MCF 10A (cell line): ENCODE measurements at regions of chr20 and their contacts with region 1.

Region 1: GRCh38 chr20:64038565-64039292 is 2.7 kb downstream of the C20orf204 start:
- DNase-seq: peak; percentile 77
- H3K4me3 Mint-ChIP-seq: peak overlapping the region; percentile 65
- H3K27ac Mint-ChIP-seq: no peak overlapping the region
- H3K4me1 Mint-ChIP-seq: peaks cover 9% of the 10 kb centered on the region
- H3K27me3 Mint-ChIP-seq: no peaks in the 10 kb centered on the region
- CTCF ChIP-seq: peak; percentile 79

Region 2: DNA sequence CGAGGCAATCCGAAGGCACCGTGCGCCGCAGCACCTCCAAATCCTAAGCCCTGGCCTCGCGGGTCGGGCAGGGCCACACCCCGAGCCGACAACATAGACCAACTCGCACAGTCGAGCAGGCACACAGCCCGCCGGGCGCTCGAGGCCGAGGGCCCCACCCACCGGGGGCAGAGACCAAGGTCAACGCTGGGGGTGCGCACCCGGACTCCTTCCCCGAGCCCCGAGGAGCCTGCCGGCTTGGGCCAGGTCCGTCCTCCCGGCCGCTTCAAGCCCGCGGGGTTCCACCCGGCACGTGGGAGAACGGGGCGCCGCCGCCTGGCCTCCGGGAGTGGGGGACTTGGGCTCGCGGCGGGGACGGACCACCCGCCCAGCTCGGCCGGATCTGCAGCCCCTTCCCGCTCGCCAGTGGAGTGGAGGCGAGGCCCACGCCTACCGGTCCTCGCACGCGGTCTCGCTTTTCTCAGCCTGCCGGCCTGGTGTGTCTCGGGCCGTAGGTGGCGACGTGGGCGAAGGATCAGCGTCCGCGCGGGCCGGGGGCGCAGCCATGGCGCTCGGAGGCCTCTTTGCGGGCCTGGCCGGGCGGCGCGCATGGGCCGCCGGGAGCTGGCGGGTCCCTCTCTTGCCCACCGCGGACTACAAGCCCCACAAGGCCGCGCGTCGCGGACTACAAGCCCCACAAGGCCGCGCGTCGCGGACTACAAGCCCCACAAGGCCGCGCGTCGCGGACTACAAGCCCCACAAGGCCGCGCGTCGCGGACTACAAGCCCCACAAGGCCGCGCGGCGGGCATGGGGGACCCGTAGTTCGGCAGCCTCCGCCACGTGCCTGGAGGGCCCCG is 82.7 kb before region 1 on chr20 and contains the start of gene UCKL1:
- CTCF ChIA-PET with region 1: interaction called, 3 read pairs
- POLR2A ChIA-PET with region 1: interaction called, 13 read pairs
- intact Hi-C with region 1: no loop called
- DNase-seq: peak; percentile 81
- H3K4me3 Mint-ChIP-seq: peak within 1 kb of the TSS; percentile 74
- H3K27ac Mint-ChIP-seq: no peak within 1 kb of the TSS
- H3K4me1 Mint-ChIP-seq: peaks cover 21% of the 10 kb centered on the region
- H3K27me3 Mint-ChIP-seq: no peaks in the 10 kb centered on the region
- CTCF ChIP-seq: no peak
- total RNA-seq, gene UCKL1: 38.6 and 43.7 TPM in 2 replicates

Region 3: GRCh38 chr20:64003960-64004725 is 34.6 kb before region 1 on chr20:
- CTCF ChIA-PET with region 1: interaction called, 18 read pairs
- POLR2A ChIA-PET with region 1: no interaction called
- intact Hi-C with region 1: no loop called
- DNase-seq: no peak
- H3K4me3 Mint-ChIP-seq: no peak overlapping the region
- H3K27ac Mint-ChIP-seq: no peak overlapping the region
- H3K4me1 Mint-ChIP-seq: no peaks in the 10 kb centered on the region
- H3K27me3 Mint-ChIP-seq: no peaks in the 10 kb centered on the region
- CTCF ChIP-seq: no peak

Region 4: DNA sequence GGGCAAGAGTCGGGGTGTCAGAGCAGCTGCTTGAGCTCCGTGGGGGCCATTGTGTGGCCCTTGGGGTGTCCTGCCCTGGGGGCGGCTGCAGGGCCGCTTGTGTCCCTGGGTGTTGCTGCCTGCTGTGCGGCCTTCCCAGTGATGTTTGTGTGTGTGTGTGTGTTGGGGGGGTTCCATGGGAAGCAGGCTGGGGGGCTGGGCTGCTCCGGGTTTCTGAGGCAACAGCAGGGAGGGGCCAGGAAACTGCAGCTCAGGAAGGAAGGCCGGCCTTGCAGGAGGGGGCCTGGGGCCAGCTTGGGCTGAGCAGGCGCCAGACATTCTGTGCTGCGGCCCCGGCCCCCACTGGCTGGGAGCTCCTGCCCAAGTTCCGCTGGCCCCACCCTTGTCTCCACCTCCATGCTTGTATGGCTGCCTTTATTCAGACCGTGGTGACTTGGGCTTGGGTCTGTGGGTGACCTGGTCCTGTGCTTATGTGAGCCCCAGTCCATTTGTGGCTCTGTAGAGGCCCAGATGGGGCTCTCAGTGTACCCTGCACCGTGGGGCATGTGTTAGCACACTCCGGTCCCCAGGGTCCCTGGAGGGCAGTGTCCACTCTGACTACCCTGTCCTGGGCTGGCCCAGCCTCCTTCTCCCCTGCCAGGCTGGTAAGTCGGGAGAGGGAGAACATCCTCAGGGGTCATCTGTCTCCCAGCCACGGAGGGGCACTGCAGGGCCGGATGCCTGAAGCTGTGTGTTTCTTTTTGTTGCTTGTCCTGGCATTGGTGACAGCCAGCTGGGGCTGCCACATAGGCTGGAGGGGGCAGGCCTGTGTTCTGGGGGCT is 15.3 kb after region 1 on chr20:
- CTCF ChIA-PET with region 1: interaction called, 284 read pairs
- POLR2A ChIA-PET with region 1: interaction called, 15 read pairs
- intact Hi-C with region 1: loop called (anchors 1 kb)
- DNase-seq: peak; percentile 33
- H3K4me3 Mint-ChIP-seq: no peak overlapping the region
- H3K27ac Mint-ChIP-seq: no peak overlapping the region
- H3K4me1 Mint-ChIP-seq: peaks cover 13% of the 10 kb centered on the region
- H3K27me3 Mint-ChIP-seq: no peaks in the 10 kb centered on the region
- CTCF ChIP-seq: no peak

Region 5: GRCh38 chr20:64069614-64070243 is 31.0 kb after region 1 on chr20:
- CTCF ChIA-PET with region 1: interaction called, 37 read pairs
- POLR2A ChIA-PET with region 1: interaction called, 11 read pairs
- intact Hi-C with region 1: no loop called
- DNase-seq: peak; percentile 41
- H3K4me3 Mint-ChIP-seq: no peak overlapping the region
- H3K27ac Mint-ChIP-seq: no peak overlapping the region
- H3K4me1 Mint-ChIP-seq: peaks cover 23% of the 10 kb centered on the region
- H3K27me3 Mint-ChIP-seq: no peaks in the 10 kb centered on the region
- CTCF ChIP-seq: peak; percentile 81